Activated CD4-positive, alpha-beta memory T cell treated with anti-CD3 and anti-CD28 coated beads, Interleukin-2, amount 10 ng/mL, durations not matched to agents 7 days and 5 days (primary cell): ENCODE measurements at regions of chr10 and their contacts with region 1.

Region 1: GRCh38 chr10:110007701-110008517 is at the start of gene ADD3:
- DNase-seq: peak; percentile 89
- H3K4me3 Mint-ChIP-seq: no peak within 1 kb of the TSS
- H3K27ac Mint-ChIP-seq: peak within 1 kb of the TSS; percentile 88
- H3K4me1 Mint-ChIP-seq: peaks cover 38% of the 10 kb centered on the region
- H3K27me3 Mint-ChIP-seq: no peaks in the 10 kb centered on the region
- total RNA-seq, gene ADD3: 400 to 401 TPM

Region 2: GRCh38 chr10:109968953-109969759 is 38.8 kb before region 1 on chr10:
- CTCF ChIA-PET with region 1: no interaction called
- POLR2A ChIA-PET with region 1: no interaction called
- DNase-seq: no peak
- H3K4me3 Mint-ChIP-seq: no peak overlapping the region
- H3K27ac Mint-ChIP-seq: no peak overlapping the region
- H3K4me1 Mint-ChIP-seq: peaks cover 2% of the 10 kb centered on the region
- H3K27me3 Mint-ChIP-seq: peaks cover 7% of the 10 kb centered on the region

Region 3: GRCh38 chr10:110059925-110060324 is 52.0 kb after region 1 on chr10:
- CTCF ChIA-PET with region 1: interaction called, 4 read pairs
- POLR2A ChIA-PET with region 1: interaction called, 17 read pairs
- DNase-seq: no peak
- H3K4me3 Mint-ChIP-seq: no peak overlapping the region
- H3K27ac Mint-ChIP-seq: peak overlapping the region; percentile 17
- H3K4me1 Mint-ChIP-seq: peaks cover 85% of the 10 kb centered on the region
- H3K27me3 Mint-ChIP-seq: no peaks in the 10 kb centered on the region

Region 4: GRCh38 chr10:110067960-110068770 is 60.3 kb after region 1 on chr10:
- CTCF ChIA-PET with region 1: interaction called, 11 read pairs
- POLR2A ChIA-PET with region 1: interaction called, 446 read pairs
- DNase-seq: peak; percentile 72
- H3K4me3 Mint-ChIP-seq: peak overlapping the region; percentile 60
- H3K27ac Mint-ChIP-seq: peak overlapping the region; percentile 97
- H3K4me1 Mint-ChIP-seq: peaks cover 83% of the 10 kb centered on the region
- H3K27me3 Mint-ChIP-seq: no peaks in the 10 kb centered on the region

Region 5: GRCh38 chr10:110076559-110077318 is 68.8 kb after region 1 on chr10:
- CTCF ChIA-PET with region 1: interaction called, 5 read pairs
- POLR2A ChIA-PET with region 1: interaction called, 446 read pairs
- DNase-seq: peak; percentile 54
- H3K4me3 Mint-ChIP-seq: peak overlapping the region; percentile 89
- H3K27ac Mint-ChIP-seq: peak overlapping the region; percentile 99
- H3K4me1 Mint-ChIP-seq: peaks cover 81% of the 10 kb centered on the region
- H3K27me3 Mint-ChIP-seq: no peaks in the 10 kb centered on the region

Region 6: GRCh38 chr10:110147961-110148360 is 140.1 kb after region 1 on chr10:
- CTCF ChIA-PET with region 1: no interaction called
- POLR2A ChIA-PET with region 1: no interaction called
- DNase-seq: peak; percentile 45
- H3K4me3 Mint-ChIP-seq: no peak overlapping the region
- H3K27ac Mint-ChIP-seq: no peak overlapping the region
- H3K4me1 Mint-ChIP-seq: peaks cover 30% of the 10 kb centered on the region
- H3K27me3 Mint-ChIP-seq: peaks cover 57% of the 10 kb centered on the region

Region 7: GRCh38 chr10:110651044-110651958 is 643.4 kb after region 1 on chr10:
- CTCF ChIA-PET with region 1: no interaction called
- POLR2A ChIA-PET with region 1: no interaction called
- DNase-seq: peak; percentile 54
- H3K4me3 Mint-ChIP-seq: no peak overlapping the region
- H3K27ac Mint-ChIP-seq: no peak overlapping the region
- H3K4me1 Mint-ChIP-seq: peaks cover 17% of the 10 kb centered on the region
- H3K27me3 Mint-ChIP-seq: peaks cover 61% of the 10 kb centered on the region